Heart left ventricle (tissue), 16 donors: ENCODE measurements at regions of chr5 and their contacts with region 1.

Region 1: DNA sequence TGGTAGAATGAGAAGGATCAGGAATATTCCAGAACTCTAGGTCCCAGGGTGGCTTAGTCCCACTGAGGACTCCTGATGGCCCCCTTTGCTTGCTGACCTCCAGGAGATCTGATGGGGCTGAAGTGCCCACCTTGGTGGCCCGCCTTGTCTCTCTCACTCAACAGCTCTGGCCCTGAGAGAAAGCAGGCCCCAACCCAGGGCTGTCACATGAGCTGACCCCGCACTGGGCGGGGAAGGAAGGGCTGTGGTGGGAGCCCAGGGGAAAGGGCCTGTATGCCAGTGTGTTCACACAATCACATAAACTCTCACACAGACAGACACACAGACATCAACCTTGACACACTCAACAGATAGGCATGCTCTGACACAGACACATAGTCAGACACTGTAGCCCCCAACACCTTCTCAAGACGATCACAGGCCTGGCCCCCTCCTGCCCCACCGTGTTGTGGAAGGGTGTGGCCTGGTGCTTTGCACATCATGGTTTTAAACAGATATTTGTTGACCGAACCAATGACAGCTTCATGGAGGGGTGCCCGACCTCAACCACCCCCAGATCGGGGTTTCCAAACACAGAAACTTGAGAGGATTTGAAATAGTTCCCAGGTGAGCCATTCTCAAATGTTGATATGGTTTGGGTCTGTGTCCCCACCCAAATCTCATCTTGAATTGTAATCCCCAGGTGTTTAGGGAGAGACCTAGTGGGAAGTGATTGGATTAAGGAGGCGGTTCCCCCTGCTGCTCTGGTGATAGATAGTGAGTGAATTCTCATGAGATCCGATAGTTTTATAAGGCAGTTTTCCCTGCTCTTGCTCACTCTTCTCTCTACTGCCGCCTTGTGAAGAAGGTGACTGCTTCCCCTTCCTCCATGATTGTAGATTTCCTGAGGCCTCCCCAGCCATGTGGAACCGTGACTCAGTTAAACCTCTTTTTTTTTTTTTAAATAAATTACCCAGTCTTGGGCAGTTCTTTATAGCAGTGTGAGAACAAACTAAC is 48.5 kb upstream of the HAND1 start:
- DNase-seq: no peak
- ATAC-seq: no peak
- H3K4me3 ChIP-seq: no peak overlapping the region
- H3K27ac ChIP-seq: no peak overlapping the region
- H3K4me1 ChIP-seq: peaks cover 0 to 18% (median 4%) of the 10 kb centered on the region in 12 donors
- H3K27me3 ChIP-seq: peaks cover 0 to 12% (median 4%) of the 10 kb centered on the region in 9 donors
- CTCF ChIP-seq: no peak
- POLR2A ChIP-seq: no peak

Region 2: DNA sequence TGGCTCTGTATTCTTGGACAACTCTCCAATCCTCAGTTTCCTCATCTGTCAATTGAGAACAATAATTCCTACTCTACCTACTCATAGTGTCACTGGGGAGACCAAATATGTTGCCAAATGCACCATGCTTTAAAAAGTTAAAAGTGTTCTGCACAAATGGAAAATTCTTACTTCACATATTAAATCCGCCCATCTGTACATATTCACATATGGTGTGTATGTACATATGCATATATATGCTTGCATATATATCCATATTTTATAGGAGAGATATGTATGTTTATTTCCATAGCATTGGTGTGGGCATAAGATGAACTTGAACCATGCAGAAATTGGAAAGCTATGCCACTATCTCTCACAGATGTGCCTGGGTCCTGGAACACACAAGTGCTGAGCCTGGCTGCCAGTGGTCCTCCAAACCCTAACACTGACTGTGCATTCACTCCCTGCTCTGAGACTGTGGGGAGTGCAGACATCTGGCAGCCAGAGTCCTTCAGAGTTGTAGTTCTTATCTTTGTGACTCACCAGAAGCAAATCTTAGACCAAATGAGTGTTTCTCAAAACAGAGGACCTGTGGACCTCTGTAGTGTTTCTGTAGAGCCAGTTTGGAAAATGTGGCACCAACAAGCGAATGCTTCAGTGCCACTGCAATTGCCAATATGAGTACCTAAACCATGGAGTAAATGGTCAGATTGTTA is 867.3 kb before region 1 on chr5:
- intact Hi-C with region 1: no loop called
- DNase-seq: no peak
- ATAC-seq: peak in 1 of 4 donors; percentile 48
- H3K4me3 ChIP-seq: no peak overlapping the region
- H3K27ac ChIP-seq: no peak overlapping the region
- H3K4me1 ChIP-seq: no peaks in the 10 kb centered on the region
- H3K27me3 ChIP-seq: no peaks in the 10 kb centered on the region
- CTCF ChIP-seq: no peak
- POLR2A ChIP-seq: no peak

Region 3: DNA sequence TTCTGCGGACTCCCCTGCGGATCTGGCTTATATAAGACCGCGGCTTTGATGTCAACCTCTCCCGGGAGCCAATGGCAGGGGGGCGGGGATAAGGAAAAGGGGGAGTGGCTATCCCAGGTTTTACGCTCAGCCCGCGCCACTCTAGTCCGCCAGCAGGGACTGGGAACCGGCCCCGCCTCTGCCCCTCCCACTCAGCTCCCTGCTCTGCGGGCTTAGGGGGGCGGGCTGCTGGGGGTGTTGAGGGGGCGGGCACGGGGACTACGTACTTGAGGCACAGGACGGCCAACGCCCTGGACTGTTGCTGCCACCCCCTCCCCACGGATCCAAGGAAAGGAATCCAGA is 48.3 kb before region 1 on chr5 and contains the start of gene HAND1:
- intact Hi-C with region 1: loop called in 1 of 10 experiments (anchors 5 kb)
- DNase-seq: peak; percentile 77 to 89 (median 85)
- ATAC-seq: peak; percentile 88 to 93 (median 92)
- H3K4me3 ChIP-seq: peak within 1 kb of the TSS; percentile 34 to 68 (median 60)
- H3K27ac ChIP-seq: peak within 1 kb of the TSS in 11 of 12 donors; percentile 57 to 95 (median 78)
- H3K4me1 ChIP-seq: peaks cover 0 to 65% (median 45%) of the 10 kb centered on the region in 12 donors
- H3K27me3 ChIP-seq: peaks cover 28 to 100% (median 97%) of the 10 kb centered on the region in 9 donors
- CTCF ChIP-seq: peak in 2 of 12 donors; percentile 4 to 14
- POLR2A ChIP-seq: no peak
- total RNA-seq, gene HAND1: 22.4 to 44.8 (median 36.4) TPM